Caco-2 (cell line): ENCODE measurements at regions of chr6 and their contacts with region 1.

Region 1: GRCh38 chr6:148166339-148166968 is 176.2 kb upstream of the SASH1 start:
- DNase-seq: peak in 1 of 2 experiments; percentile 44
- H3K4me3 ChIP-seq: no peak overlapping the region
- H3K4me3 Mint-ChIP-seq: no peak overlapping the region
- H3K27ac Mint-ChIP-seq: no peak overlapping the region
- H3K4me1 ChIP-seq: no peaks in the 10 kb centered on the region
- H3K4me1 Mint-ChIP-seq: no peaks in the 10 kb centered on the region
- H3K27me3 ChIP-seq: no peaks in the 10 kb centered on the region
- H3K27me3 Mint-ChIP-seq: no peaks in the 10 kb centered on the region
- CTCF ChIP-seq: peak; percentile 60 to 64

Region 2: DNA sequence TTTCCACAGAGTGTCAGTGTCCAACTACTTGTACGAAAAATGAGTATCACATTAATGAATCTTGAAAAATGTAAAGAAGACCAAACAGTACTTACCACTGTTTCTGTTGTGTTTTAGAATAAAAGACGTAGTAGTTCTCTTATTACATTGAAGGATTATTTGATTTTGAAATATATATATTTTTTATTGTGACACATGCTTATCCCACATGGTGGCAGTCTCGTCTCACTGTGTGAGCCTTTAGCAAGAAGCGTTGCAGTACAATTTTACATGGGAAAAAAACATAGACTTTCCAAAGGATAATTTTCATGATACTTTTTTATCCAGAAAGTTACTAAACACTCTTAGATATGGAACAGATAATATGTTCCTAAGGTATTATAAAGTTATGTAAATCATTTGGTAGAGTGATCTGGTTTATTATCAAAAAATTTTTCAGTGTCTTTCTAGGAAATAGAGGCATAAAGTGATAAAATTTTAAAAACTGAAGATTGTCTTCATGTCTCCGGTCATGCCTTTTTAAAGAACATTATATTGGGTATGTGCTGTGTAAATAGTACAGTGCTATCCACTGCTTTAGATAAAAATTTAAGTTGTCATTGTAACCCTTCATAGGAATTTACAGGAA is 775.4 kb before region 1 on chr6:
- CTCF ChIA-PET with region 1: no interaction called
- POLR2A ChIA-PET with region 1: no interaction called
- intact Hi-C with region 1: loop called (anchors 1 kb)
- DNase-seq: peak in 1 of 2 experiments; percentile 25
- H3K4me3 ChIP-seq: no peak overlapping the region
- H3K4me3 Mint-ChIP-seq: no peak overlapping the region
- H3K27ac Mint-ChIP-seq: no peak overlapping the region
- H3K4me1 ChIP-seq: no peaks in the 10 kb centered on the region
- H3K4me1 Mint-ChIP-seq: no peaks in the 10 kb centered on the region
- H3K27me3 ChIP-seq: no peaks in the 10 kb centered on the region
- H3K27me3 Mint-ChIP-seq: no peaks in the 10 kb centered on the region
- CTCF ChIP-seq: peak; percentile 31 to 36

Region 3: GRCh38 chr6:147787417-147787816 is 379.0 kb before region 1 on chr6:
- CTCF ChIA-PET with region 1: no interaction called
- POLR2A ChIA-PET with region 1: no interaction called
- intact Hi-C with region 1: loop called (anchors 5 kb)
- DNase-seq: peak in 1 of 2 experiments; percentile 23
- H3K4me3 ChIP-seq: no peak overlapping the region
- H3K4me3 Mint-ChIP-seq: no peak overlapping the region
- H3K27ac Mint-ChIP-seq: no peak overlapping the region
- H3K4me1 ChIP-seq: no peaks in the 10 kb centered on the region
- H3K4me1 Mint-ChIP-seq: peaks cover 4% of the 10 kb centered on the region
- H3K27me3 ChIP-seq: no peaks in the 10 kb centered on the region
- H3K27me3 Mint-ChIP-seq: no peaks in the 10 kb centered on the region
- CTCF ChIP-seq: peak in 1 of 2 experiments; percentile 34

Region 4: GRCh38 chr6:148144917-148145521 is 21.4 kb before region 1 on chr6:
- CTCF ChIA-PET with region 1: no interaction called
- POLR2A ChIA-PET with region 1: no interaction called
- intact Hi-C with region 1: loop called (anchors 1 kb)
- DNase-seq: peak; percentile 65 to 76
- H3K4me3 ChIP-seq: no peak overlapping the region
- H3K4me3 Mint-ChIP-seq: peak overlapping the region; percentile 50
- H3K27ac Mint-ChIP-seq: no peak overlapping the region
- H3K4me1 ChIP-seq: peaks cover 8% of the 10 kb centered on the region; the same call in 1 of the 2 replicates
- H3K4me1 Mint-ChIP-seq: peaks cover 25% of the 10 kb centered on the region
- H3K27me3 ChIP-seq: no peaks in the 10 kb centered on the region
- H3K27me3 Mint-ChIP-seq: no peaks in the 10 kb centered on the region
- CTCF ChIP-seq: peak; percentile 74 to 80

Region 5: GRCh38 chr6:148203970-148204369 is 37.5 kb after region 1 on chr6:
- CTCF ChIA-PET with region 1: no interaction called
- POLR2A ChIA-PET with region 1: no interaction called
- intact Hi-C with region 1: no loop called
- DNase-seq: no peak
- H3K4me3 ChIP-seq: no peak overlapping the region
- H3K4me3 Mint-ChIP-seq: no peak overlapping the region
- H3K27ac Mint-ChIP-seq: no peak overlapping the region
- H3K4me1 ChIP-seq: no peaks in the 10 kb centered on the region
- H3K4me1 Mint-ChIP-seq: peaks cover 7% of the 10 kb centered on the region
- H3K27me3 ChIP-seq: no peaks in the 10 kb centered on the region
- H3K27me3 Mint-ChIP-seq: no peaks in the 10 kb centered on the region
- CTCF ChIP-seq: no peak